ENCODE measurements at regions of chr1 and their contacts with region 1.

Region 1: GRCh38 chr1:31394628-31395193 is 18.3 kb upstream of the SERINC2 start:
- DNase-seq: peak; percentile 77
- H3K27ac ChIP-seq: peak overlapping the region; percentile 86
- CTCF ChIP-seq: peak; percentile 89

Region 2: GRCh38 chr1:31315902-31316301 is 78.8 kb before region 1 on chr1:
- CTCF ChIA-PET with region 1: no interaction called
- POLR2A ChIA-PET with region 1: no interaction called
- DNase-seq: no peak
- H3K27ac ChIP-seq: no peak overlapping the region
- CTCF ChIP-seq: no peak

Region 3: DNA sequence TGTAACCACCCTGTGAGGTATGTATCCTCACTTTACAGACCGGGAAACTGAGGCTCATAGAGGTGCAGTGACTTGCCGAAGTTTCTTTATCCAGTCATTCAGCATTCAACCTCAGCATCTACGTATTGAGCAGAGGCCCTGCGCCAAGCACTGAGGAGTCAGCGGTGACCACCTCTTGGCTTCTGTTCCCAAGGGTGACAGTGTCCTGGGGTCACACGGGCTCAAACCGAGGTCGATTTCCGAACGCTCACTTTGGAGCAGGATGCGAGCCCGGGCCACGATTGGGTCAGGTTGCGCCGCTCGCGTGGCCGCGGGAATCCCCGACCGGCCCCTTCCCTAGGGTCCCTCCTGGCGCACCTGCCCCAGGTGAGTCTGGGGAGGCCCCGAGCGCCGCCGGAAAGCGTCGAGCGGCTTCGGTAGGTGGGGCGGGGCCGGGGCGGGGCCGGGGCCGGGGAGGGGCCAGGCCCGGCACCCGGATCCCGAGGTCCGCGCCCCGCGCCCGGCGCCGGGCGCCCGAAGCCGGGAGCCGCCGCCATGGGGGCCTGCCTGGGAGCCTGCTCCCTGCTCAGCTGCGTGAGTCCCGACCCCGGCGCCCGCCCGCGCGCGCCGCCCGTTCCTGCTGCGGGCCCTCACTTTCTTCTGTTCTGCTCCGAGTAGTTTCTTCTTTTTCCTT is 18.2 kb after region 1 on chr1 and contains the start of gene SERINC2:
- CTCF ChIA-PET with region 1: interaction called, 11 read pairs
- POLR2A ChIA-PET with region 1: interaction called, 3 read pairs
- DNase-seq: peak; percentile 82
- H3K27ac ChIP-seq: peak within 1 kb of the TSS; percentile 98
- CTCF ChIP-seq: no peak

Region 4: GRCh38 chr1:31422505-31423319 is 28.0 kb after region 1 on chr1:
- CTCF ChIA-PET with region 1: interaction called, 34 read pairs
- POLR2A ChIA-PET with region 1: interaction called, 3 read pairs
- DNase-seq: peak; percentile 94
- H3K27ac ChIP-seq: peak overlapping the region; percentile 87
- CTCF ChIP-seq: peak; percentile 93

Region 5: DNA sequence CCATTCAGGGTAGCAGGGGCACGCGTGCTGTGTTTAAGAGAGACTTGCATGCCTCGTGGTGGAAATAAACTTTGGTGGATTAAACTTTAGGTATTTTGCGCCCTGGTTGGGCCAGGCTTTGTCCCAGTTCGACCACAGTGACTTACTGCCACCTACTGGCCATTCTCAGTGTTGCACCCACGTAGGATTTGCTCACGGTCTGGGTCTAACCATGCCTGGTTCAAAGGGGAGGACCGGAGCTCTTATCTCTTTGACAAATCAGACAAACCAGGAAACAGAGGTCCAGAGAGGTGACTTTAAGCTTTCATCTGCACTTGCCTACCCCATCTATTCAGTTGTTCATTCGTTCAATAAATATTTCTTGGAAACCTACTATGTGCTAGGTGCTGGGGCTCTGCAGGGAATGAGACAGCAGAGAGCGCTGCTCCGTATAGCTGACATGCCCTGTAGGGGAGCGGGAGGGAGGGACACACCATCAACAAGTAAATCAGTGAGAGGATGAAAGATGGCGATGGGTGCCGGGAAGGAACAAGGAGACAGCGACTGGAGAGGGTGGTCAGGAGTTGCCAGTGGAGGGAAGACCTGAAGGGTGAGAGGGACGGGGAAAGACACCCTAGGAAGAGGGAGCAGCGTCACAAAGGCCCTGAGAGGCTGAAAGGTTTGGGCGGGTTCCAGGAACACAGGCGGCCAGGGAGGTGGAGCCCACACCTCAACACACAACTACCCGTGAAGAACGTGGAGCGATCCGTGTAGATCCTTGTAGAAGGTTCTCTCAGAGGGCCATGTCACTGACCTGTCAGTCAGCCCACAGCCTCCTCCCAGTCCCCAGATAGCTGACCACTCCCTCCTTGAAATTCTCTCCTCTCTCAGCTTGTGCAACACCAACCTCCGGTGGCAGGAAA is 154.4 kb after region 1 on chr1:
- CTCF ChIA-PET with region 1: interaction called, 15 read pairs
- POLR2A ChIA-PET with region 1: no interaction called
- DNase-seq: peak; percentile 80
- H3K27ac ChIP-seq: peak overlapping the region; percentile 73
- CTCF ChIP-seq: peak; percentile 93

Measured in RWPE1 (cell line).